ENCODE measurements at regions of chr19 and their contacts with region 1.

Region 1: GRCh38 chr19:12757544-12758274 is 6.1 kb downstream of the BEST2 start:
- DNase-seq: peak; percentile 72
- H3K4me3 Mint-ChIP-seq: peak overlapping the region; percentile 35
- H3K27ac Mint-ChIP-seq: no peak overlapping the region
- H3K4me1 Mint-ChIP-seq: peaks cover 5% of the 10 kb centered on the region
- H3K27me3 Mint-ChIP-seq: no peaks in the 10 kb centered on the region
- CTCF ChIP-seq: peak; percentile 97

Region 2: GRCh38 chr19:12716861-12717260 is 40.8 kb before region 1 on chr19:
- CTCF ChIA-PET with region 1: interaction called, 8 read pairs
- POLR2A ChIA-PET with region 1: interaction called, 3 read pairs
- intact Hi-C with region 1: loop called (anchors 1 kb)
- DNase-seq: peak; percentile 71
- H3K4me3 Mint-ChIP-seq: no peak overlapping the region
- H3K27ac Mint-ChIP-seq: peak overlapping the region; percentile 76
- H3K4me1 Mint-ChIP-seq: peaks cover 6% of the 10 kb centered on the region
- H3K27me3 Mint-ChIP-seq: no peaks in the 10 kb centered on the region
- CTCF ChIP-seq: peak; percentile 43

Region 3: GRCh38 chr19:12974301-12975220 is 216.9 kb after region 1 on chr19:
- CTCF ChIA-PET with region 1: no interaction called
- POLR2A ChIA-PET with region 1: no interaction called
- intact Hi-C with region 1: no loop called
- DNase-seq: no peak
- H3K4me3 Mint-ChIP-seq: no peak overlapping the region
- H3K27ac Mint-ChIP-seq: no peak overlapping the region
- H3K4me1 Mint-ChIP-seq: peaks cover 6% of the 10 kb centered on the region
- H3K27me3 Mint-ChIP-seq: no peaks in the 10 kb centered on the region
- CTCF ChIP-seq: no peak